Activated CD4-positive, alpha-beta memory T cell treated with anti-CD3 and anti-CD28 coated beads for 36 hours (primary cell): ENCODE measurements at regions of chr11 and their contacts with region 1.

Region 1: GRCh38 chr11:106063009-106063408 is 14.1 kb downstream of the KBTBD3 start:
- DNase-seq: no peak
- H3K4me3 Mint-ChIP-seq: no peak overlapping the region
- H3K27ac Mint-ChIP-seq: no peak overlapping the region
- H3K4me1 Mint-ChIP-seq: peaks cover 18% of the 10 kb centered on the region
- H3K27me3 Mint-ChIP-seq: no peaks in the 10 kb centered on the region

Region 2: DNA sequence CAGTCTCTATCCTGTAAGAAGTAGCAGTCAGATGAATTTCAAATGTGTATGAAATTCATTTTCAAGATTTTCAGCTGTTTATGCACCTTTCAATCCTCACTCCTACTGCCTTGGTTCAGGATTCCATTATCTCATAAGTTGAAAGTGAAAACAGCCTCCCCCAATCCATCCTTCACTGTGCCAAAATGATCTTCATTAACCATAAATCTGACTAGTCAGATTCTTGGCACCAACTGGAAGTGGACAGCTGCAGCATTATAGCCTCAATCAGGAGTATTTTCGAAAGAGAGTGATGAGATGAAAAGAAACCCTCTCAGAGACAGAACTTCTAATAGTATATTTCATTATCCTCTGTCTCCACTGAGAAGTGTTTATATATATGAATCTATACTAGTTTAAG is 1533.8 kb before region 1 on chr11:
- CTCF ChIA-PET with region 1: no interaction called
- POLR2A ChIA-PET with region 1: no interaction called
- intact Hi-C with region 1: loop called (anchors 5 kb)
- DNase-seq: no peak
- H3K4me3 Mint-ChIP-seq: no peak overlapping the region
- H3K27ac Mint-ChIP-seq: no peak overlapping the region
- H3K4me1 Mint-ChIP-seq: peaks cover 5% of the 10 kb centered on the region
- H3K27me3 Mint-ChIP-seq: no peaks in the 10 kb centered on the region

Region 3: GRCh38 chr11:106091480-106092123 is 28.6 kb after region 1 on chr11:
- CTCF ChIA-PET with region 1: no interaction called
- POLR2A ChIA-PET with region 1: no interaction called
- intact Hi-C with region 1: loop called (anchors 1 kb)
- DNase-seq: peak; percentile 48
- H3K4me3 Mint-ChIP-seq: no peak overlapping the region
- H3K27ac Mint-ChIP-seq: peak overlapping the region; percentile 44
- H3K4me1 Mint-ChIP-seq: peaks cover 44% of the 10 kb centered on the region
- H3K27me3 Mint-ChIP-seq: no peaks in the 10 kb centered on the region